Activated CD4-positive, alpha-beta T cell treated with anti-CD3 and anti-CD28 coated beads, Interleukin-2, amount 10 ng/mL, durations not matched to agents 24 days and 14 days (primary cell): ENCODE measurements at regions of chr2 and their contacts with region 1.

Region 1: GRCh38 chr2:74458132-74458925 is at the start of gene WBP1:
- DNase-seq: peak; percentile 99
- H3K4me3 Mint-ChIP-seq: peak within 1 kb of the TSS; percentile 100
- H3K27ac Mint-ChIP-seq: peak within 1 kb of the TSS; percentile 100
- H3K4me1 Mint-ChIP-seq: peaks cover 54% of the 10 kb centered on the region
- H3K27me3 Mint-ChIP-seq: no peaks in the 10 kb centered on the region
- total RNA-seq, gene WBP1: 28.8 and 29.0 TPM in 2 replicates

Region 2: GRCh38 chr2:73385595-73386341 is 1072.6 kb before region 1 on chr2 and contains the start of gene ALMS1:
- intact Hi-C with region 1: loop called (anchors 5 kb)
- DNase-seq: peak; percentile 97
- H3K4me3 Mint-ChIP-seq: peak within 1 kb of the TSS; percentile 92
- H3K27ac Mint-ChIP-seq: peak within 1 kb of the TSS; percentile 93
- H3K4me1 Mint-ChIP-seq: peaks cover 23% of the 10 kb centered on the region
- H3K27me3 Mint-ChIP-seq: peaks cover 8% of the 10 kb centered on the region
- total RNA-seq, gene ALMS1: 19.6 and 21.9 TPM in 2 replicates

Region 3: GRCh38 chr2:74198461-74199274 is 259.7 kb before region 1 on chr2 and contains the start of gene MTHFD2:
- intact Hi-C with region 1: loop called (anchors 2 kb)
- DNase-seq: peak; percentile 98
- H3K4me3 Mint-ChIP-seq: peak within 1 kb of the TSS; percentile 96
- H3K27ac Mint-ChIP-seq: peak within 1 kb of the TSS; percentile 100
- H3K4me1 Mint-ChIP-seq: peaks cover 38% of the 10 kb centered on the region
- H3K27me3 Mint-ChIP-seq: no peaks in the 10 kb centered on the region
- total RNA-seq, gene MTHFD2: 418 and 439 TPM in 2 replicates

Region 4: DNA sequence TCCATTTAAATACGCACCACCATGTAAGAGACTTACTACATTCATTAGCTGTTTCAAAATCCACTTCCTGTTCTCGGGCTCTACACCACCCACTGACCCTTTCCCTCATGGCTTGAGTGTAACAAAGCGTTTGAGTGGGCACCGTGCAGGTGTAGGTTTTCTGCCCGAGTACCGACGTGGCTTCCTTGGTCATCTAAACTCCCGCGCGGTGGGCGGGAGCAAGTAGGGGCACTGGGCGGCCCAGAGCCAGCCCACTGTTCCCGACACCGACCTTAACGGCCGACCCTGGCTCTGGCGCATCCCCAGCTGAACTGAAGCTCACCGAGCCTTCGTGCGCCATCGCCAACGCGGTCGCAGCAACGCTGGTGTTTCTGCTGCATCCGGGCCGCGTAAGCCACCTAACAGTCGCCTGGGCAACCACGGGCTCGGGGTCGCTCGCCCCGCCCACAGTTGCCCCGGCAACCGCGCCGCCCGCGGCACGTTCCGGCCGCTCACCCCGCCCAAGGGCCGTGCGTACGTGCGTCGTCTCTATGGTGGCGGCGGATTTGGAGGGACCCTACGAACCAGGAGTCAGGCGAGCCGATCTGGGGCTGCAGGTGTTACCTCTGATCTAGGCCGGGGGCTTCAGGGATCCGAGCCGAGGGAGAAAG is 37.0 kb before region 1 on chr2 and contains the starts of genes C2orf81 and WDR54:
- intact Hi-C with region 1: loop called (anchors 1 kb)
- DNase-seq: peak; percentile 99
- H3K4me3 Mint-ChIP-seq: peak within 1 kb of the TSS; percentile 94
- H3K27ac Mint-ChIP-seq: peak within 1 kb of the TSS; percentile 96
- H3K4me1 Mint-ChIP-seq: peaks cover 20% of the 10 kb centered on the region
- H3K27me3 Mint-ChIP-seq: peaks cover 2% of the 10 kb centered on the region
- total RNA-seq, gene C2orf81: 1.7 and 2.0 TPM in 2 replicates
- total RNA-seq, gene WDR54: 72.1 and 78.2 TPM in 2 replicates

Region 5: DNA sequence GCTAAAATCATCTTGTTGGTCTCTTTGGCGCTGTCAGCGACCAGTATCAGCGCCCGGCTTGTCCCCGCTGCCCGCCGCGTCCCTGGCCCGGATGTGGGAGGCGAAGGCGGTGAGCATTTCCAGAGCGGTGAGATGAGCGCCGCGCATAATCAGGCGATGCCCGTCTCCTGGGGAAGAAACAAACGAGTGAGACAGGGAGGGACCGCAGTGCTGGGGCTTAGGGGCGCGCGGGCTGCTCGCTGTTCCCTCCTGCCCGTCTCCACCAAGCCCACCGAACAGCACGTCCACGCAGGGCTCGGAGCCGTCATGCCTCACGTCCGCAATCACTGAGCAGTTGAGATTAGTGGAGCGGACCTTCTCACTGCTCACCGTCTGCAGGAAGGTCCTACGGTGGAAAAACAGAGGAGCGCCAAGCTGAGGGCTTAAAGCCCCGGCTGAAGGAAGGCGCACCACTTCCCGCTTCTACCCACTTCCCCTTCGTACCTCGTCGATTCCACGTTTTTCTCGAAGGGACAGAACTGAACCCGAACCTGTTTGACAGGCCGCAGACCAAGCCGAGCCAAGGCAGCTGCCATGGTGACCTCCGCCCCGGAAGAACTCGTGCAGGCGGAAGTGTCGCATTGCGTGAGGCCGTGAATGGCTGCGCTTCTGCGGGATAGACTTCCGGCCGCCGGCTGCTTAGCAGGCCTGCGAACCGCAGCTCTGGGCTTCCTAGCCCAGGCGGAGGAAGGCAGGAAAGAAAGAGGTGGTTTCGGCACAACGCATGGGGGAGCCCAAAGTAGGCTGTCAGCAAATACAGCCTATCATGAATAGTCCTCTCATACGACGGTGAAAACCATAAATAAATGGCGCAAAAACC is 14.0 kb after region 1 on chr2 and contains the start of gene MRPL53:
- intact Hi-C with region 1: loop called (anchors 1 kb)
- DNase-seq: peak; percentile 99
- H3K4me3 Mint-ChIP-seq: peak within 1 kb of the TSS; percentile 99
- H3K27ac Mint-ChIP-seq: peak within 1 kb of the TSS; percentile 98
- H3K4me1 Mint-ChIP-seq: peaks cover 22% of the 10 kb centered on the region
- H3K27me3 Mint-ChIP-seq: no peaks in the 10 kb centered on the region
- total RNA-seq, gene MRPL53: 89.0 and 115 TPM in 2 replicates